Mammary epithelial cell (primary cell): ENCODE measurements at regions of chr6 and their contacts with region 1.

Region 1: DNA sequence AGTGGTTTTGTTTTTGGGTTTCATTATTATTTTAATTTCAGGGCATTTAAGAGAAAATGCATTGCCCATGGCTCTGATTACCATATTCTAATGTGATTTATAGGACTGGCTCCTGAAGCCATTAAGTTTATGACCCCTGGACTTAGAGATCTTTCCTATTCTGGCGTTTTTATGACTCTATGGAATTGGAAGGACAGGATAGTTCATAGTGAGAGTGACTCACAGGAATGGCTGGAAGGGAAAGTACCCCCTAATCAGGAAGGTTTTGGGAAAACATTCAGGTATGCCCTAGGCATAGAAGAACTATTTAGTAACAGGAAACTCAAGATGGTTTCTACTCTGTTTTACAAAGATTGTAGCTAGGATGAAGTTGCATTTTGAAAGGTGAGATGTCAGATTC is 108.6 kb upstream of the SLC2A12 start:
- DNase-seq: peak; percentile 74
- H3K4me3 ChIP-seq: no peak overlapping the region
- H3K27ac ChIP-seq: no peak overlapping the region
- H3K4me1 ChIP-seq: peaks cover 7% of the 10 kb centered on the region
- H3K27me3 ChIP-seq: no peaks in the 10 kb centered on the region
- CTCF ChIP-seq: no peak

Region 2: DNA sequence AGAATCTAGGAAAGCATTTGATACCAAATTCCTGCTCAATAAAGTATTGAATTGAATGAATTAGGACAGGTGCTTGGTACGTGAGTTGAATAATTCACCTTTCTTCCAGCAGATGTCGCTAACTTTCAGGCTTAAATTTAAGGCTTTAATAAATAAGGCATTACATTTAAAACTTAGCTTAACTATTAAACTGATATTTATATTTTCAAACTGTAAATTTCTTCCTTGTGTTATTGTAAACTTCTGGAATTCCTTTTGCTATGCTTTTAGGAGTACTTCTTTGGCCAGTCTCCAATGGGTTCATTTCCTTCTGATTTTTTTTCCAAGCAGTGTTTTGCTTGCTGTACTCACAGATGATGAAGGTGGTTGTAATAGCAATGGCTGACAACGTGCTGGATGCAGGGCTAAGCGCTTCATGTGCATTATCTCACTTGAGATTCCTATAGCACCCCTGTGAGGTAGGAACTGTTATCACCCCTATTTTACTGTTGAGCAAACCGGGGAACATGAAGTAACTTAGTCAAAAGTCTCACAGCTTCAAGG is 37.3 kb before region 1 on chr6:
- CTCF ChIA-PET with region 1: no interaction called
- dilution Hi-C with region 1: no loop called
- in situ Hi-C with region 1: no loop called
- intact Hi-C with region 1: loop called (anchors 5 kb)
- DNase-seq: peak; percentile 80
- H3K4me3 ChIP-seq: no peak overlapping the region
- H3K27ac ChIP-seq: no peak overlapping the region
- H3K4me1 ChIP-seq: peaks cover 11% of the 10 kb centered on the region
- H3K27me3 ChIP-seq: no peaks in the 10 kb centered on the region
- CTCF ChIP-seq: peak; percentile 60 to 82

Region 3: GRCh38 chr6:134816780-134817179 is 655.7 kb after region 1 on chr6:
- CTCF ChIA-PET with region 1: no interaction called
- dilution Hi-C with region 1: loop called (anchors 5 kb)
- in situ Hi-C with region 1: loop called in 1 of 2 experiments (anchors 5 kb)
- intact Hi-C with region 1: no loop called
- DNase-seq: no peak
- H3K4me3 ChIP-seq: no peak overlapping the region
- H3K27ac ChIP-seq: no peak overlapping the region
- H3K4me1 ChIP-seq: peaks cover 10% of the 10 kb centered on the region
- H3K27me3 ChIP-seq: no peaks in the 10 kb centered on the region
- CTCF ChIP-seq: no peak

Region 4: GRCh38 chr6:134882426-134883038 is 721.5 kb after region 1 on chr6:
- CTCF ChIA-PET with region 1: no interaction called
- dilution Hi-C with region 1: no loop called
- in situ Hi-C with region 1: no loop called
- intact Hi-C with region 1: loop called (anchors 1 kb)
- DNase-seq: peak; percentile 67
- H3K4me3 ChIP-seq: no peak overlapping the region
- H3K27ac ChIP-seq: no peak overlapping the region
- H3K4me1 ChIP-seq: no peaks in the 10 kb centered on the region
- H3K27me3 ChIP-seq: no peaks in the 10 kb centered on the region
- CTCF ChIP-seq: peak; percentile 98

Region 5: GRCh38 chr6:134938896-134939295 is 777.9 kb after region 1 on chr6:
- CTCF ChIA-PET with region 1: no interaction called
- dilution Hi-C with region 1: loop called (anchors 5 kb)
- in situ Hi-C with region 1: loop called in 1 of 2 experiments (anchors 10 kb)
- intact Hi-C with region 1: loop called (anchors 1 kb)
- DNase-seq: no peak
- H3K4me3 ChIP-seq: no peak overlapping the region
- H3K27ac ChIP-seq: no peak overlapping the region
- H3K4me1 ChIP-seq: peaks cover 13% of the 10 kb centered on the region
- H3K27me3 ChIP-seq: no peaks in the 10 kb centered on the region
- CTCF ChIP-seq: no peak

Region 6: GRCh38 chr6:135002229-135002844 is 841.3 kb after region 1 on chr6:
- CTCF ChIA-PET with region 1: no interaction called
- dilution Hi-C with region 1: no loop called
- in situ Hi-C with region 1: no loop called
- intact Hi-C with region 1: loop called (anchors 1 kb)
- DNase-seq: no peak
- H3K4me3 ChIP-seq: no peak overlapping the region
- H3K27ac ChIP-seq: no peak overlapping the region
- H3K4me1 ChIP-seq: no peaks in the 10 kb centered on the region
- H3K27me3 ChIP-seq: no peaks in the 10 kb centered on the region
- CTCF ChIP-seq: peak; percentile 65 to 74